ENCODE measurements at regions of chr11 and their contacts with region 1.

Region 1: GRCh38 chr11:127825183-127825582 is 762.2 kb downstream of the ETS1 start:
- DNase-seq: no peak
- H3K4me3 ChIP-seq: no peak overlapping the region
- H3K4me3 Mint-ChIP-seq: no peak overlapping the region
- H3K27ac ChIP-seq: no peak overlapping the region
- H3K27ac Mint-ChIP-seq: no peak overlapping the region
- H3K4me1 ChIP-seq: no peaks in the 10 kb centered on the region
- H3K4me1 Mint-ChIP-seq: no peaks in the 10 kb centered on the region
- H3K27me3 ChIP-seq: no peaks in the 10 kb centered on the region
- H3K27me3 Mint-ChIP-seq: peaks cover 15% of the 10 kb centered on the region in 2 donors

Region 2: DNA sequence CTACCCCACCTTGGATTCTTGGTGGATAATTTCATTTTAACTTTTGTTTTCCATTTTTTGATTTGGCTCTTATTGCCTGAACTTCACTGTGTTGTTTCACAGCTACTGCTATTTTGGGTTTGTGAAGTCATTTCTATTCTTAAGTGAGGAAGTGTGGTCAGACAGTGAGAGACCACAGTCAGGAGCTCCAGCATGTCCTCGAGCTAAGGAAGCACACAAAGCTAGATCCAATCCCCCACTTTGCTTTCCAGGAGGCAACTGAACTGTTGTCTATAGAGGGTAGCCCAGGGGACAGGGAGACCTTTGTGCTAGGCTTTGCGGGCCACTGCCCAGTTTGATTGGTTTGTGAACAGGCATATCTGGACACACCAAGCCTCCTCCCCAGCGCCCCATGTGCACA is 572.9 kb before region 1 on chr11:
- CTCF ChIA-PET with region 1: no interaction called
- POLR2A ChIA-PET with region 1: no interaction called
- intact Hi-C with region 1: no loop called
- DNase-seq: no peak
- H3K4me3 ChIP-seq: no peak overlapping the region
- H3K4me3 Mint-ChIP-seq: no peak overlapping the region
- H3K27ac ChIP-seq: no peak overlapping the region
- H3K27ac Mint-ChIP-seq: no peak overlapping the region
- H3K4me1 ChIP-seq: no peaks in the 10 kb centered on the region
- H3K4me1 Mint-ChIP-seq: no peaks in the 10 kb centered on the region
- H3K27me3 ChIP-seq: no peaks in the 10 kb centered on the region
- H3K27me3 Mint-ChIP-seq: no peaks in the 10 kb centered on the region

Region 3: DNA sequence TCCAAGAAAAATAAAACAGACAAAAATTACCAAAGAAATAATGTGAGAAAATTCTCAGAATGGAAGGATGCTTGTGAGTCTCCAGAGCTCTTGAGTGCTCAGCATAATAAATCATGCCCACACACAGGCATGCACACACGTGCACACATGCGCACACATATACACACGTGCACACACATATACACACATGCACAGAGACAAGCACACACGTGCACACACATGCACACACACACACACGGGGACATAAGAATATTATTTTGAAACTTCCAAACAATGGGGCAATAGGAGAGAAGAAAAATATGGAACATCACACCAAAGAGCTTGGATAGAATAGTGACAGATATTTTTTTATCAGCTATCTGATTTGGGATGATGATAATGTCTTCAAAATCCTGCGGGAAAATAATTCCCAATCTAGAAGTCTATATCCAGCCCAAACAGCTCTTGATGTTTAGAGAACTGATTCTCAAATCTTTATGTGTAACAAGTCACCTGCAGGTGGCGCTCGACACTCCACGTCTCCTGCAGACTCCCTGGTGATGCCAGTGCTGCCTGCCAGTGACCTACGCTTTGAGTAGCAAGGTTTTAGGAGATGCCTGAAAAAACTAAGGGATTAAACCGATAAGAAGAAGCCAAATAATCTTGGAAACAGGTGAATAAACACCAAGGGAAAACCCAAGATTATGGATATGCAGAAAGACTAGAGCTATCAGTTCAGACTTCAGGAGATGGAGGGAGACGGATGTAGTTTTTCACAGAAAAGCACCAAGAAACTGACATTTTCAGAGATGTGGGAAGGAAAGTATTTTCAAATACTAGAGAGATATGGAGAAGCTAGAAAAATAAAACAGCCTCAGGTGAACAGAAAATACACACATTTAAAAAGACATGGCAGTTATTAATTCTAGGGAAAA is 18.6 kb after region 1 on chr11:
- CTCF ChIA-PET with region 1: interaction called, 10 read pairs
- POLR2A ChIA-PET with region 1: no interaction called
- intact Hi-C with region 1: no loop called
- DNase-seq: peak in 4 of 5 donors; percentile 17 to 26 (median 20)
- H3K4me3 ChIP-seq: no peak overlapping the region
- H3K4me3 Mint-ChIP-seq: no peak overlapping the region
- H3K27ac ChIP-seq: no peak overlapping the region
- H3K27ac Mint-ChIP-seq: no peak overlapping the region
- H3K4me1 ChIP-seq: no peaks in the 10 kb centered on the region
- H3K4me1 Mint-ChIP-seq: no peaks in the 10 kb centered on the region
- H3K27me3 ChIP-seq: no peaks in the 10 kb centered on the region
- H3K27me3 Mint-ChIP-seq: peaks cover 6 to 8% of the 10 kb centered on the region in 2 donors